ENCODE measurements at regions of chr6 and their contacts with region 1.

Region 1: GRCh38 chr6:36765594-36766398 is 68.2 kb downstream of the RAB44 start:
- DNase-seq: peak; percentile 83

Region 2: GRCh38 chr6:36780442-36781177 is 14.8 kb after region 1 on chr6:
- CTCF ChIA-PET with region 1: interaction called, 14 read pairs
- POLR2A ChIA-PET with region 1: interaction called, 4 read pairs
- DNase-seq: no peak

Region 3: DNA sequence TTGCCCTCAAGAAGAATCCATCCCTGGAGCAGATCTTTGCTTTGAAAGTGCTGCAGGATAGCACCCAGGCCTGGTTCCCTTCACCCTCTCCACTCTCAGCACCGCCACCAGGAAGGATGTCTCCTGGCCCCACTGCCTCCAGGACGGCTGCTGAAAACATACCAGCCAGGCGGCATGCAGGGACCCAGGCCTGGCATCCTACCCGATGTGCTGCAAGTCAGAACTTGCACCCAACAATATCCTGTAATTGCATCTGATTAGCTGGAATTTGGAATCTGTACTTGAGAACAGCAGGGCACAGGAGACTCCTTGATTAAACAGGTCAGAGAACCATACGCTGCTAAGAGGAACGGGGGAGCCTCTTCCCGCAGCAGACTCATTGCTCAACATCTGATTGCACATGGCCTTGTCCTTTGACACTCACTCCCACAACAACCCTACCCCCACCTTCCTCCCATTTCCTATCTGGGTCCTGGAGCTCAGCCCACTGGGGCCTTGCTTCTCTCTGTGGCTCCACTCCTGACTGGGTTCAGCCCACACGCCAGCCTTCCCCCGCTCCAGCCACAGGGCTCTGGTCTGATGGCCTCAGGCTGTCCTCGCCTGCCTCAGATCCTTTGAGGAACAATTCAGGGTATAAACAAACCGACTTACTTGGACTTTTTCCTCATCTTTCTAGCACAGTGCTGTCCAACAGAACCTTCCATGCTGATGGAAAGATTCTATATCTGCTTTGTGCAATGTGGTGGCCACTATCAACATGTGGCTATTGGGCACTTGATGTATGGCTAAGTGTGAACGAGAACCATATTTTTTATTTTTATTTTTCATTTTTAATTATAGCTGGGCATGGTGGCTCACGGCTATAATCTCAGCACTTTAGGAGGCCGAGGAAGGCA is 317.7 kb after region 1 on chr6:
- CTCF ChIA-PET with region 1: no interaction called
- POLR2A ChIA-PET with region 1: no interaction called
- DNase-seq: no peak

Measured in HEK293T (cell line).